Left colon (tissue), 2 donors: ENCODE measurements at regions of chr9 and their contacts with region 1.

Region 1: DNA sequence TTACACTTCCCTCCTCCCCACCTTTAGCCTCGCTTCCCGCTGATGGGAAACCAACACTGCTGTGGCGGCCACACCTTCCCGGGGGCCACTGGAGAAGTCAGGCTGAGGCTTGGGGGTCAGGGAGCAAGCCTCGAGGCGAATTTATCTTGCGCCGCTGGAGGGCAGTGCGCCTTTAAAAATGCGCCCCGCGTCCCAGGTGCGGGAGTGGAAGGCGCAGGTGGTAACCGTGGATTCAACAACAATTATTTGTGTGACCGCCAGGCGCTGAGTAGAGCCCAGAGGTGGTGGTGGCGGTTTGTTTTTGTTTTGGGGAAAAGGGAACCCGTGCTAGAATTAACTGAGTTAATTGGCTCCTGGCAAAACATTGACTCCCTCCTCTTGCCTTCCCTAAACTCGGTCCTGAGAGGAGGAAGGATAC is 1.1 kb downstream of the CFAP77 start:
- DNase-seq: peak; percentile 40 to 65
- ATAC-seq: peak; percentile 67

Region 2: GRCh38 chr9:132575005-132575609 is 164.0 kb after region 1 on chr9:
- intact Hi-C with region 1: loop called in 1 of 2 experiments (anchors 10 kb)
- DNase-seq: peak; percentile 63 to 78
- ATAC-seq: peak; percentile 99